Activated B cell treated with CpG ODN at 0.5 μM for 24 hours (primary cell): ENCODE measurements at regions of chr5 and their contacts with region 1.

Region 1: DNA sequence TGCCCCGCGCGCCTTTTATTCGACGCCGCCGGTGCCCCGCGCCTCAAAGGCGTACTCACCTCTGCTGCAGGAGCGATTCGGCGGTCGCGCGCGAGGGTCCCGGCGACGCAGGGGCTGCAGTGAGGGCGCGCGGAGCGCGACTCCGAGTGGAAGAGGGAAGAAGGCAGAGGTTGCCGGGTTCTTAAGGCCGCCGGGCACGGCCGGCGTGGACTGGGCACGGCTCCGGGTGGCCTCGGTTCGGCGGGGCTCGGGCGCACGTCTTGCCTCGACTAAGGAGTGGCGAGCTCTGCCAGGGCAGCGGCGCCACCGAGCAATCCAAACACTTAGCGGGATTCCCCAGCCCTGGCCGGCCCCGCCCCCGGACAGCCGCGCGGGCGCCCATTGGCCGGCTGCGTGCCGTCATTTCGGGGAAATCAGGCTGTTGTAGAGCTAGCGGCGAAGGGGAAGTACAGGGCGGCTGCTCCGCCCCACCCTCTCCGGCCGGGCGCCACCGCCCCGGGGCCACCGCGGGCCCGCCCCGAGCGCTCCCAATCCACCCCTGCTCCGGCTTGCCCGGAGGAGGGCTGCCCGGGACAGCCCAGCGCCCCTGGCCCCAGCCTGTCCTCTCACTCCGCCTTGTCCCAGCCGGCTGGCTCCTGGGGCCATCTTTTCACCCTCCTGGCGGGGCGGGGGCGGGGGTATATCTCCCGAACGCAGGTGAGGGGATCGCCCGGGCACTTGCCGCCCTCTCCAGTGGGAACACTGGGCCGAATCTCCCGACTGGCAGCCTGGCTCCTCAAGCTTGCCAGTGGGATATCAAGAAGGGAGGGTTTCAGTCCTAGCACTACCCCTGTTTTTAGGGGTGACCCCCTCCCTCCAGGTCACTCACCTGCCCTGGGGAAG is at the start of gene IRF1:
- DNase-seq: peak; percentile 98
- ATAC-seq: peak; percentile 71
- H3K4me3 Mint-ChIP-seq: peak within 1 kb of the TSS; percentile 95
- H3K27ac Mint-ChIP-seq: peak within 1 kb of the TSS; percentile 93
- H3K4me1 Mint-ChIP-seq: peaks cover 82% of the 10 kb centered on the region
- H3K27me3 Mint-ChIP-seq: no peaks in the 10 kb centered on the region
- CTCF ChIP-seq: no peak
- total RNA-seq, gene IRF1: 126 and 134 TPM in 2 replicates

Region 2: DNA sequence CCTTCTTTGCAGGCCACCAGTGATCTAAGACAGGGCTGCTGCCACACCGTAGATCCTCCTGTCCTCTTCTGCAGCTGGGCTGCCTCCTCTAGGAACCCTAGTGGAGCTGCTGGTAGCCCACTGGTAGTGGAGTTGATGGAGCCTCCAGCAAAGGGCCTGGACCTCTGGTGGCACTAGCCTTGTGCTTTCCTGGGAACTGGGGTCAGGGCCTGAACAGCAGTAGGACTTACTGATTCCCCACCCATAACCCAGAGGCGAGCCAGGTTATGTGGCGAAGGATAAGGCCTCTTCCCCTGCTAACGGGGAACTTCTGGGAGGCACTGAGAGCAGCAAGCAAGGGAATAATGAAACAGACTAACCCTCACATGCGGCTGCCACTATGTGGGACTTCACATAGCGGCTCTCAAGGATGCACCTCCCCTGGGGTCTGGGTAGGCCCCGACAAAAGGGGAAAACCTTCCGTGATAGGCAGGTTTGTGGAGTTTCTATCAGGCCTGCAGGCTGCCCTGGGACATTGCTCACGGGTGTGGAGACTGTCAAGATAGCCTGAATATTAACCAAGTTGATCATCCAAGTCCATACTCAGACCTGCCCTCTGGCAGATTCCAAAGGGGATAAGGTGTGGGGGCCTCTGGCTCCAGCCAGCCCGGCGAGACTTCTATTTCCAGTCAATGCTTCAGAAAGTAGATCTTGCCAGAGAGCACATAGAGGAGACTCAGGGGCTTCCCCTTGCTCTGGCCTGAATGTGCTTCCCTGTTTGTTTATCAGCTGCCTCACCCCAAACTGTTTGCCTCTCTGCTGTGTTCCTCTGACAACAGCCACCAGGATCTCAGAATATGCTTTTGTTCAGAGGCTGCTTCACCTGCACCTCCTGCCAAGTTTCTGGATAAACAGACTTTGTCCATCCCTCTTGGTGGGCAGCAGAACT is 189.1 kb before region 1 on chr5:
- CTCF ChIA-PET with region 1: no interaction called
- POLR2A ChIA-PET with region 1: no interaction called
- intact Hi-C with region 1: no loop called
- DNase-seq: no peak
- ATAC-seq: no peak
- H3K4me3 Mint-ChIP-seq: no peak overlapping the region
- H3K27ac Mint-ChIP-seq: no peak overlapping the region
- H3K4me1 Mint-ChIP-seq: no peaks in the 10 kb centered on the region
- H3K27me3 Mint-ChIP-seq: peaks cover 2% of the 10 kb centered on the region
- CTCF ChIP-seq: no peak

Region 3: GRCh38 chr5:132394667-132395259 is 96.0 kb before region 1 on chr5:
- CTCF ChIA-PET with region 1: interaction called, 253 read pairs
- POLR2A ChIA-PET with region 1: interaction called, 27 read pairs
- intact Hi-C with region 1: no loop called
- DNase-seq: no peak
- ATAC-seq: peak; percentile 91
- H3K4me3 Mint-ChIP-seq: peak overlapping the region; percentile 59
- H3K27ac Mint-ChIP-seq: peak overlapping the region; percentile 65
- H3K4me1 Mint-ChIP-seq: peaks cover 29% of the 10 kb centered on the region
- H3K27me3 Mint-ChIP-seq: no peaks in the 10 kb centered on the region
- CTCF ChIP-seq: no peak

Region 4: DNA sequence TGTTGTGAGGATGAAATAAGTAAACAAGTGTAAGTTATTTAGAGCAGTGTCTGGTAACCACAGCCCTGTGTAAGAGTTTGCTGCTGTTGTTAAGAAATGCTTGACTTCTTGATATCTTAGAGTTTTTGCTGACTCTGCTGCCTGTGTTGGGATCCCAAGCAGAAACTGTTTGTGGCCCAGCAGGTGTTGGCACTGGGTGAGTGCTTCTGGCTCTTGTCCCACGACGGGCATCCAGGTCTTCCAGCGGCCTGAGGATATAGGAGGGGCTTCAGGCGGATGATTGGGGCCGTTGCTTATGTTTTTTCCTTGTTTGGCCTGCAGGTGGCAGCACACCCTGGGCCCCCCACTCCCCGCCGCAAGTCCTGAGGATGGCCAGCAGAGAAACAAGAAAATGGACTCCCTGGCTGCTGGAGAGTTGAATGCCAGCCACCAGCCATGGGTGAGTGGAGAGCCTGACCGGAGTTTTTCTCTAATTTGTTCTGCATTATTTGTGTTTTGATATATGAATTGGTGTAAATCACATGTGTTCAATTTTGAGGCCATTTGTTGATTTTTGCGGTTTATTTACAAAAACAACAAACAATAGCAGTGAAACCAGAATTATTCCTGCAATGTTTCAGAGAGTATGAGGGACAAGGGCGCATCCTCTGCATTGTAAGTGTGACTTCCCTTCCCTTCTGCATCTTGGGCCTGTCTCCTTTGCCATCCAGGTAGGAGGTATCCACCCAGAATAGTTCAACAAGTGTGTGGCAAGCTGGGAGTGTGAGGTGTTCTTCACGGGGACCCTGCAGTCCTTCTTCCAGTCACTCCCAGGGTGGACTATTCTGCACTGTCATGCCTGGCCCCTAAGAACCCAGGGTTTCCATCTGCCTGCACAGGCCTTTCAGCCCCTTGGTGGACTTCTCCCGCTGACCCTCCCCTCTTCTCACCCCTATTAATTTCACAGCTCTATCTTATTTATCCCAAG is 70.9 kb before region 1 on chr5:
- CTCF ChIA-PET with region 1: interaction called, 47 read pairs
- POLR2A ChIA-PET with region 1: interaction called, 461 read pairs
- intact Hi-C with region 1: loop called (anchors 1 kb)
- DNase-seq: peak; percentile 62
- ATAC-seq: peak; percentile 35
- H3K4me3 Mint-ChIP-seq: peak overlapping the region; percentile 82
- H3K27ac Mint-ChIP-seq: peak overlapping the region; percentile 90
- H3K4me1 Mint-ChIP-seq: peaks cover 97% of the 10 kb centered on the region
- H3K27me3 Mint-ChIP-seq: no peaks in the 10 kb centered on the region
- CTCF ChIP-seq: peak; percentile 51

Region 5: DNA sequence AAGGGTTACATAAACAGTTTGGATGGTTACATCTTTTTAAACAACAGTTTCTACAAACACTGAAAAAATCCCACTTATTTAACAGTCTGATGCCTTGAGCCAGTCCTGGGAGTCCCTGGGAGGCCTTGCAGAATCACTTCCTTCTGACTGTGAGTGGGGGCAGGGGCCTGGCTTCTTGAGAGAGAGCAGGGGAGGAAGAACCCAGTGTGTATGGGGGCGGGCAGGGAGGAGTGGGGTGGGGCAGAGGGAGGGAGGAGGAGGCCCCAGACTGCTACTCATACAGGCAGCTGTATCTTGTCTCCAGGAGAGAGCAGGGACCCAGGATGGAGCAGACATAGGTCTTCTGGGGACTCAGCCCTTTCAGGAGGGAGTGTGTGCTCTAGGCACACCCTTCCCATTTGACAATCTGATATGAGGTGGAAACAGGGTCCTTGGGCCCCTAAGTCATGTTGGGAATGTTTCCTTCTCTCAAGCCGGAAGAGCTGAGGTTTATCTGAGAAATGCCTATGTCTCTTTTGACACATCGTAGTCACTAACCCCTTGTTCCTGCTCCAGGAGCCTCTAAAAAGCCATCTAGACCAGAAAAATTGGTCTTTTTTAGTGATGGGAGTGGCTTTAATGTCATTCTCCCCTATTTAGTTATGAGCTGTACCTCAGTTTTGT is 53.0 kb before region 1 on chr5:
- CTCF ChIA-PET with region 1: interaction called, 6 read pairs
- POLR2A ChIA-PET with region 1: interaction called, 461 read pairs
- intact Hi-C with region 1: no loop called
- DNase-seq: no peak
- ATAC-seq: peak; percentile 96
- H3K4me3 Mint-ChIP-seq: peak overlapping the region; percentile 48
- H3K27ac Mint-ChIP-seq: peak overlapping the region; percentile 74
- H3K4me1 Mint-ChIP-seq: peaks cover 60% of the 10 kb centered on the region
- H3K27me3 Mint-ChIP-seq: no peaks in the 10 kb centered on the region
- CTCF ChIP-seq: no peak

Region 6: DNA sequence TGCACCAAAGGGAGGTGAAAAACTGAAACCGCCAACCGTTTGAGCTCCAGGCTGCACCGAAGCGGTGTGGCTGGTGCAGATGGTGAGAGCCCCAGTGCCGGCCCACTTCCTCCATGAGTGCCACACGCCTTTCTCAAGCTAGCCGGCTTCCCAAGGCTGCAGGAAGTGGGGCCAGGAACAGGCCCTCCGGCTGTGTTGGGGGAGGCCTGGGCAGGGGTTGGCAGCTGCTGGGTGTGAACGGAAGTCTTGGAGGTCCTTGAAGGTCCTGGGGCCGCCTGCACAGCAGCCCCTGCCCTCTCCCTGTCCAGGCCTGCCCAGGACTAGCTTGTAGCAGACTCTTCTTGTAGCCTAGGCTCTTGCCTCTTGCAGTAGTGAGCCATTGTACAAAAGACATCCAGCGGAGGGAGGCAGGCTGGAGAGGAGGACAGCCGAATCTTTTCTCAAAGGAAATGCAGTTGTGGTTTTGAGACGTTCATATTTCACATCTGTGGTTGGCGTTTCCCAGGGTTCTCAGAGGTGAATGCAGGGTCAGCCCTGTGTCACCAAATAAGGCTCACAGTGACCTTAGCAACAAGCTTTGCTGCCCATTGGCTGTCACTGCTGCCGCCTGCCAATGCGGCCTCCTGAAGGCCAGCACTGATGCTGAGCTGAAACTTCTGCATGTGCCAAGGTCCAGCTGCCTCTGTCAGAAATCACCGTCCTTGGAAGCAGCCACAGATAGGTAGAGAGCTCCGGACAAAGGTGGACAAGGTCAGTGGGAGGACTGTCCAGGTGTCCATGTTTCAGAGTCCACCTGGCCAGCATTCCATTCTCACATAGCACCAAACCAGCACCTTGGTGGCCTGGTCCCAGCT is 24.1 kb before region 1 on chr5:
- CTCF ChIA-PET with region 1: interaction called, 7 read pairs
- POLR2A ChIA-PET with region 1: interaction called, 286 read pairs
- intact Hi-C with region 1: no loop called
- DNase-seq: peak; percentile 44
- ATAC-seq: peak; percentile 64
- H3K4me3 Mint-ChIP-seq: peak overlapping the region; percentile 55
- H3K27ac Mint-ChIP-seq: peak overlapping the region; percentile 54
- H3K4me1 Mint-ChIP-seq: peaks cover 92% of the 10 kb centered on the region
- H3K27me3 Mint-ChIP-seq: no peaks in the 10 kb centered on the region
- CTCF ChIP-seq: no peak

Region 7: GRCh38 chr5:132479111-132479951 is 11.4 kb before region 1 on chr5:
- CTCF ChIA-PET with region 1: interaction called, 25 read pairs
- POLR2A ChIA-PET with region 1: interaction called, 286 read pairs
- intact Hi-C with region 1: loop called (anchors 1 kb)
- DNase-seq: no peak
- ATAC-seq: no peak
- H3K4me3 Mint-ChIP-seq: no peak overlapping the region
- H3K27ac Mint-ChIP-seq: peak overlapping the region; percentile 83
- H3K4me1 Mint-ChIP-seq: peaks cover 73% of the 10 kb centered on the region
- H3K27me3 Mint-ChIP-seq: no peaks in the 10 kb centered on the region
- CTCF ChIP-seq: no peak

Region 8: GRCh38 chr5:132556763-132557477 is 66.2 kb after region 1 on chr5 and contains the start of gene RAD50:
- CTCF ChIA-PET with region 1: no interaction called
- POLR2A ChIA-PET with region 1: interaction called, 17 read pairs
- intact Hi-C with region 1: loop called (anchors 2 kb)
- DNase-seq: peak; percentile 89
- ATAC-seq: peak; percentile 97
- H3K4me3 Mint-ChIP-seq: peak within 1 kb of the TSS; percentile 97
- H3K27ac Mint-ChIP-seq: peak within 1 kb of the TSS; percentile 94
- H3K4me1 Mint-ChIP-seq: peaks cover 28% of the 10 kb centered on the region
- H3K27me3 Mint-ChIP-seq: no peaks in the 10 kb centered on the region
- CTCF ChIP-seq: no peak
- total RNA-seq, gene RAD50: 42.5 and 42.6 TPM in 2 replicates

Region 9: DNA sequence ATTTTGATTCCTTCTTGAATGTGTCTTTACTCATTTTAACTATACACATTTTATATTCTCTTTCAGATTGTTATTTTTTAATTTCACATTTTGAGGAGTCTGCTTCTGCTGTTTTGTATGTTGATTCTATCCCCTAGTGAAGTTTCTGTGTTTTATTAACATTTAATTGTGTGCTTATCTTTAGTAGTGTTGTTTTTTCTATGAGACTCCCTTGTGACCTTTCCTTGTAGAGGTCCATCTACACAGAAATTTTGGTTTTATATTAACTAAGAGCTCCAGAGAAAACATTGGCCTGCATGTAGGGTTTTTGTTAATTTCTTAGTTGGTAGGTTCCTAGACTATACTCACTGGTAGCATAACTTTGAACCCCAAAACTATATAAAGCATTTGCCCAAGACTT is 131.9 kb after region 1 on chr5:
- CTCF ChIA-PET with region 1: no interaction called
- POLR2A ChIA-PET with region 1: no interaction called
- intact Hi-C with region 1: no loop called
- DNase-seq: no peak
- ATAC-seq: no peak
- H3K4me3 Mint-ChIP-seq: no peak overlapping the region
- H3K27ac Mint-ChIP-seq: no peak overlapping the region
- H3K4me1 Mint-ChIP-seq: no peaks in the 10 kb centered on the region
- H3K27me3 Mint-ChIP-seq: no peaks in the 10 kb centered on the region
- CTCF ChIP-seq: no peak